Head of caudate nucleus (tissue), 42 donors: ENCODE measurements at regions of chr6 and their contacts with region 1.

Region 1: DNA sequence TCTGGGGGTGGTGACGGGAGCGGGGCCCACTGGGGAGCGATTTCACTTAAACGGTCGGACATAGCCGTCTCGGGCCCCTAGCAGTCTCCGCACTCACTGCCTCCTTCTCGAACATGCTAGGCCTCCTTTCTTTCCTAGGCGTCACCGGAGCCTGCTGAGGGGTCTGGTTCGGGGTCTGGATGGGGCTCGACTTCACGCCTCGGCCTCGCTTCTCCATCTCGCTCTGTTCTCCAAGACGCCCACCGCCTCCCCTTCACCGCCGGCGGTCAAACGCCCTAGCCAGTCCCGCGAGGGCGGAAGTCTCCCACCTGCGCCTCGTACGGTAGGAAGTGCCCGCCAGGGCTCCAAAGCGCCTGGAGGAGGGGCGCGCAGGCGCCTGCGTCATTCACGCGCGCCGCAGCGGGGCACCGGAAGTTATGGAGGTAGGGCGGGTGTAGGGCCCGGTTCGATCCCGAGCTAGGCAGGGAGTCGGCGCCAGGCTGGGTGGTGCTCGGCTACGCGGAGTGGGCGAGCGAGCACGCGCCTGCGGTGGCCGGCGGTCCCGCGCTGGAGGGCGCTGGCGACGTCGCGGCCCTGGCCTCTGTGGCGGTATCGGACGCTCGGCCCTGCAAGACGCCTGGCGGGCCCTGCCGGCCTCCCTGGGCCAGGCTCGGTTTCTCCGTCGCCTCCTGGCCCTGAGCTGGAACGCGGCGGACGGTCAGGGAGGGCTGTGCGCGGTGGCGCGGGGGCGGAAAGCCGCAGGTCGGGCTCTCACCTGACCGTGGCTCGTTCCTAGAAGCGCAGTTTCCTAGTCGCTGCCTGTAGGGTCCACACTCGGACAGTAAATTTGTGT is at the starts of genes DYNLT2 and ERMARD:
- DNase-seq: peak; percentile 83 to 97 (median 94)

Region 2: DNA sequence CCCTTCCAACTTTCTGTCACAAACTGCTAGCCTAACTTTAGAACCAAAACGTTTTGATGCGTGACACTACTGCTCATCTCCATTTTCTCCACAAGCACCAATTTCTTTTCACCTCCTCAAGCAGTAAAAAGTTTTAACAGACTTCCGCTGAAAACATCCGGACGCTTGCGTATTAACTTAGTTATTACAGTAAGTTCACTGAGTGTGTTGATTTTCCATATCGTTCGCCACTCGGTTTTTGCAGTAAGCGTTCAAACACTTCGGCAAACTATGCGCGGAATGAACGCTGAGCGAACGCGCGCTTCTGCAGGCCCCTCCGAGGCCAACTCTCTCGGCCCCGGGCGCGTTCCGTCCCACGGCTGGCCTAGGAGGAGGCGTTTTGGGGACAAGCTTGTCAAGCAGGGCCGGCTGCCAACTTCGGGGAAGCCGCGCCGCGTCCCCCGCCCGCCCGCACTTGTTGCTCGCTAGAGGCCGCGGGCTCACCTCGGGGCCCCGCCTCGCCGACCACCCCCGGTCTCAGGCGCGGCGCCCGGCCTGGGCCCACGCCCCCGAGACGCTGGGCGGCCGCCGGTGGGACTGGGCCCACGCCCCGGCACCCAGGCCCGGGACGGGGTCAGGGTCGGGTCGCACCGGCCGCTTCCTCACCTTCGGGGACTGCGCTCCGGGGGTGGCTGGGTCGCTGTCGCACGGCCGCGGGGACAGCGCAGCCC is 28.1 kb before region 1 on chr6:
- intact Hi-C with region 1: loop called (anchors 2 kb)
- DNase-seq: peak; percentile 44 to 90 (median 78)

Region 3: DNA sequence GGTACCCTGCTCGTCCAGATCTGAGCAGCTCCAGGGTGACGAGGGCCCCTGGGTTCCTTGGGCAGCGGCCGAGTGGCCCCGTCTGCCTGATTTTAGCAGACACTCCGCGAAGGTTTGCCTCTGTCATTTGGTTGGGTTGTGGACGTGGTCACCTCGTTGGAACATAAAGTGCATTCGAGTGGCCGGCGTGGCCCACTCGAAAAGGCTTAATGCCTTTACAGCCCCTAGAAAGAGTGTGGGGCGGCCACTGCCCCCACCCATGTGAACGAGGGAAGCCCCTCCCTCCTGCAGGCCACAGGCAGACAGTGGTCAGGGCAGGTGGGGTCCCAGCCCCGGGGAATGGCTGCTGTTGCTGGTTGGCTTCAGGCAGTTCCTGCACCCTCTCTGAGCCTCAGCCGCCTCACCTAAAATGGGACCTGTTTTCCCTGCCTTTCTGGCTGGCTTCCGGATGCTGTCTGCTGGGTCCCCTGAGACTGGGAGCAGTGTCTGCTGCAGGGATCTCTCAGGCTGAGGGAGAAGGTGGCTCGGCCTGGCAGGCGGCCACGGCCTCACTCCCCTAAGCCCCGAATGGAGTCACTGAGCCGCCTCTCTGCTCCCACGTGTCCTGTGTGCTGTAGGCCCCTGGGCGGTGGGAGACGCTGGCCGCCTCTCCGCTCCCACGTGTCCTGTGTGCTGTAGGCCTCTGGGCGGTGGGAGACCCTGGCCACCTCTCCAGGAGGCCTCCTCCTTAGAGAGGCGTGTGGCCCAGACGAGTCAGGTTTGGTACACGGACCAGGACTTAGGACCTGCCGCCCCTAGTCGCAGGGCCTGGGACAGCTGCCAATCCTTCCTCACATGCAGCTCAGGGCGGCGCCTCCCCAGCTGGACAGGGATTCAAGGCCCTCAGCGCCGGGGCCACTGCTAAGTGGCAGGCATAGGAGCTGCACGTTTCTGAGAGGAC is 233.0 kb after region 1 on chr6:
- intact Hi-C with region 1: no loop called
- DNase-seq: peak in 7 of 42 donors; percentile 11 to 35 (median 25)

Region 4: DNA sequence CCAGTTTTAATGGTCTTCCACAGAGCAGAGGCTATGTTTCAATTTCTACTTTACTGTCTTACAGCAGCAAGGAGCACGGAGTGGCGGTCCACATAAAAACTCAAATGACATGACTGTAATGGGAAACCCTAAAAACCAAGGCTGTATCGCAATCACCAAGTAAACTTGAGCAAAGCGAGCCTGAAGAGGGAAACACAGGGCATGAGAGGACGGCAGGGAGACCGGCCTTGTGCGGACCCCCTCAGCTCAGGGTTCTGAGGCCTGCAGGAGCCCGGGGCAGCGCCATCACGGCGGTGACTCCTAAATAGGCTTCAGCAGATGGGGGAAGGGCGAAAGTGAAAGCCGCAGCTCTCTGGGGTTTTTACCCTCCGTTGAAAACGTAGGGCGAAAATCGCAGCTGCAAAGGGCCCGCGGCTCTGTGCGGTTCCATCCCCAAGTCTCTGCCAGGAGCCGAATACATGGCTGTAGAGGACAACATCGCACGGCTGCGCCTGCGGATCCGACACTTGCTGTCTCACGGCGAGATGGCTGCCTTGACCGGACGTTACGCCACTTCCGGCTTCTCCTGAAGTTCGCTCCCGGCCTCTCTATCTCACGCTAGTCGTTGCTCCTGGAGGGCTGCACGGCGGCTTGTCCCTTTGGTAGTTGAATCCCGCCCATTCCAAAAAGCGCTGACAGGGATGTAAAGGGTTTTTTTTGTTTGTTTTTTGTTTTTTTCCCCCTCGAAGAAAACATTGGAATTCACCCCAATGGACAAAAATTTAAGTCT is 801.5 kb after region 1 on chr6 and contains the start of gene PSMB1:
- intact Hi-C with region 1: loop called (anchors 1 kb)
- DNase-seq: peak; percentile 96 to 99 (median 98)